ENCODE measurements at regions of chr9 and their contacts with region 1.

Region 1: DNA sequence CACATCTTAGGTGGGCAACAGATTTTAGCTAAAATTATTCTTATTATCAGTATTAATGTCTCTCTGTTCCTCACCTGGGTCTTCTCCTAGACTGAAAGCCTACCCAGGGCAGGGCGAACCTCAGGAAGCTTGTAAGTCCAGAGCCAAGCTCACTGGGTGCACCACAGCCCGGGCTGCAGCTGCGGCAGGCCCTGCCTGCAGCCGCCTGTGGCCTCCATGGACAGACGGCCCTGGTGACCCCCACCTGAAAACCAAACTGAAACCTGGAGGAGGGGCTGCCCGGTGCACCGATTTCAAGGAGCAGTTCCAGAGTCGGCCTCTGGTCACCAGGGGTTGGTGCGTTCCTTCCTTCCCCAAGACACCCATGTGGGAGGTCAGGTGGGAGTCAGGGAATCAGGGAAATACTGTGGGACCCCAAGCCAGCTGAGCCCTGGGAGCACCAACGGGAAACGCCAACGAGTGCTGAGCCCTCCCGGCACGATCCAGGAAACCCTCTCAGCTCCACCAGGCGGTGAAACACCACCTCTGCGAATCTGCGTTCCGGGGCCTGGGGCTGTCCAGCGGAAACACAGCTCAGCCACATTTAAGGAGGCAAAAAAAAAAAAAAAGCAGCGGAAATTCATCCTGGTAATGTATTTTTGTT is 68.6 kb upstream of the PPP1R26 start:
- DNase-seq: no peak
- ATAC-seq: no peak
- H3K4me3 ChIP-seq: no peak overlapping the region
- H3K27ac ChIP-seq: no peak overlapping the region
- H3K4me1 ChIP-seq: no peaks in the 10 kb centered on the region
- H3K27me3 ChIP-seq: no peaks in the 10 kb centered on the region
- CTCF ChIP-seq: no peak

Region 2: GRCh38 chr9:134698587-134699342 is 712.2 kb before region 1 on chr9:
- intact Hi-C with region 1: loop called in 2 of 3 experiments (anchors 5 to 10 kb)
- DNase-seq: peak; percentile 50 to 90 (median 76)
- ATAC-seq: peak; percentile 81 to 91 (median 86)
- H3K4me3 ChIP-seq: no peak overlapping the region
- H3K27ac ChIP-seq: no peak overlapping the region
- H3K4me1 ChIP-seq: no peaks in the 10 kb centered on the region
- H3K27me3 ChIP-seq: no peaks in the 10 kb centered on the region
- CTCF ChIP-seq: peak; percentile 71 to 90 (median 86)

Region 3: DNA sequence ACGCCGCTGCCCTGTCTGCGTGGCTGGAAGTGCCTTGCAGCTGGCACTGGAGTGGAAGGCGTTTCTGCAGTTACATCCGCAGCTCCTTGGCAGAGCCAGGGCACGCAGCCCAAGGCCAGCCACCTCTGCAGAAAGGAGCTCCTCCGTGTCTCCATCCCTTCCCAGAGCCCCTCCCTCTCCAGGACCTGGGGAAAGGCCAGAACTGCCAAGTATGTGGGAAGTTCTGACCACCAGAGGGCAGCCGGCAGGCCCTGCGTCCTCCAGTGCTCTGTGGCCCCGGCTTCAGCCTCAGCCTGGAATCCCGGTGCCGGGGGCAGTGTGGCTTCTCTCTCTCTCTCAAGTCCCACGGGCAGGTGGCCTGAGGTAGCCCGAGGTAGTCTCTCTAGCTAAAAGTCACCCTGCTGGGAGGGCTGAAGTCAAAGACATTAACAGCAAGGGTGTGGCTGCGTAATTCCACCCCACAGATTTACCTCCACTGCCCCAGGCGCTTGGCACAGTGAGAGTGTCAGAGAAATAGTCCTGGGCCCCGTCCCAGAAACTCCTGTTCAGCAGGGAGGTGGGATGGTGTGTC is 632.0 kb before region 1 on chr9:
- intact Hi-C with region 1: loop called in 1 of 3 experiments (anchors 5 kb)
- DNase-seq: peak in 5 of 6 donors; percentile 32 to 72 (median 48)
- ATAC-seq: peak; percentile 74 to 89 (median 78)
- H3K4me3 ChIP-seq: no peak overlapping the region
- H3K27ac ChIP-seq: no peak overlapping the region
- H3K4me1 ChIP-seq: no peaks in the 10 kb centered on the region
- H3K27me3 ChIP-seq: peaks cover 0 to 2% (median 0%) of the 10 kb centered on the region in 4 donors
- CTCF ChIP-seq: peak; percentile 22 to 40 (median 36)

Region 4: GRCh38 chr9:135080286-135081263 is 330.4 kb before region 1 on chr9:
- intact Hi-C with region 1: loop called in 2 of 3 experiments (anchors 5 kb)
- DNase-seq: peak in 2 of 6 donors; percentile 15 to 24
- ATAC-seq: no peak
- H3K4me3 ChIP-seq: no peak overlapping the region
- H3K27ac ChIP-seq: no peak overlapping the region
- H3K4me1 ChIP-seq: peaks cover 9 to 12% (median 11%) of the 10 kb centered on the region in 3 donors
- H3K27me3 ChIP-seq: no peaks in the 10 kb centered on the region
- CTCF ChIP-seq: no peak

Region 5: GRCh38 chr9:135085830-135086546 is 325.0 kb before region 1 on chr9:
- intact Hi-C with region 1: loop called in 2 of 3 experiments (anchors 5 kb)
- DNase-seq: peak; percentile 83 to 95 (median 90)
- ATAC-seq: peak; percentile 85 to 93 (median 88)
- H3K4me3 ChIP-seq: peak overlapping the region in 2 of 4 donors; percentile 10 to 28
- H3K27ac ChIP-seq: peak overlapping the region in 2 of 4 donors; percentile 10 to 39
- H3K4me1 ChIP-seq: peaks cover 18 to 31% (median 26%) of the 10 kb centered on the region in 3 donors
- H3K27me3 ChIP-seq: no peaks in the 10 kb centered on the region
- CTCF ChIP-seq: peak; percentile 94 to 98 (median 94)

Region 6: GRCh38 chr9:135320943-135321629 is 89.9 kb before region 1 on chr9:
- intact Hi-C with region 1: no loop called
- DNase-seq: no peak
- ATAC-seq: no peak
- H3K4me3 ChIP-seq: no peak overlapping the region
- H3K27ac ChIP-seq: no peak overlapping the region
- H3K4me1 ChIP-seq: no peaks in the 10 kb centered on the region
- H3K27me3 ChIP-seq: no peaks in the 10 kb centered on the region
- CTCF ChIP-seq: no peak

Region 7: GRCh38 chr9:135718616-135719015 is 307.7 kb after region 1 on chr9:
- intact Hi-C with region 1: no loop called
- DNase-seq: no peak
- ATAC-seq: no peak
- H3K4me3 ChIP-seq: no peak overlapping the region
- H3K27ac ChIP-seq: no peak overlapping the region
- H3K4me1 ChIP-seq: no peaks in the 10 kb centered on the region
- H3K27me3 ChIP-seq: peaks cover 0 to 17% (median 0%) of the 10 kb centered on the region in 4 donors
- CTCF ChIP-seq: no peak

Measured in pancreas (tissue), 10 donors.